GM10248 (cell line): ENCODE measurements at regions of chr1 and their contacts with region 1.

Region 1: DNA sequence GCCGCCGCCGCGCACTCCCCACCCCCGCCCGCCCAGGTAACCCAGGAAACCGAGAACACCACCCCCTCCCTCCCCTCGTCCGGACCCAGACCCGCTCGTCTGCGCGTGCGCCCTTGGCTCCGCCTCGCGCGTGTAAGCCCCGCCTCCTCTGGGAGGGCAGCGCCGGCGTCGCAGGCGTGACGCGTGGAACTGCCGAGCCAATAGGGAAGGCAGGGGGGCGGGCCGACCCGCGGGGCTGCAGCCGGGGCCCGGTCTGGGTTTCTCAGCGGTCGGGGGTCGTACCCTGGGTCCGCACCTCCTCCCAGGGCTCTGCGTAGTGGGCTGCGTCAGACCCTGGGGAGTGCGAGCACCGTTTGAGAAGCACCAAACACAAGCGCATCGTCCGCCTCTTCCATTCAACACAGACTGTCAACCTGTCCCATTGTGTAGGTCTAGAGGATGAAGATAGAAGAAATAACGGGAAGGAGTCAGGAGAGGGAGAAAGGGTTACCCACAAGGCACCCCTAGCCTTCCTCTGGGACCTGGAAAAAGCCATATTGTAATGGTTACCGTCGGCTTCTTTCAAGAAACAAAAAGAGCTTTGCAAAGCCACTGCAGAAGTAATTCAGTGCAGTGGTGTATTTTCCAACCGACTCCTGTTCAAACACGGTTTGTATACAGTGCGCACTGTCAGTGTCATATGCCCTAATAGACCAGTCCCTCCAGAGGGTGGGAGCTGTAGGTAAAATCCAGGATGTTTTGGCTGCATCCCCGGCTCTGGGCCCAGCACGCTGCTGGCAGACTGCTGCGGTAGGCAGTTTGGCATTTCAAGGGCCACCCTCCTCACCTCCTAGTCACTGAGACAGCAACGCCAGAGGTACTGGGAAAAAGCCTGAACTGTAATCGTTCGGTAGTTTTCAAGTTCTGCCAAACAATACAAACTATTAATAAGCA is 473 bp upstream of the LYST start:
- DNase-seq: peak; percentile 98
- CTCF ChIP-seq: no peak

Region 2: DNA sequence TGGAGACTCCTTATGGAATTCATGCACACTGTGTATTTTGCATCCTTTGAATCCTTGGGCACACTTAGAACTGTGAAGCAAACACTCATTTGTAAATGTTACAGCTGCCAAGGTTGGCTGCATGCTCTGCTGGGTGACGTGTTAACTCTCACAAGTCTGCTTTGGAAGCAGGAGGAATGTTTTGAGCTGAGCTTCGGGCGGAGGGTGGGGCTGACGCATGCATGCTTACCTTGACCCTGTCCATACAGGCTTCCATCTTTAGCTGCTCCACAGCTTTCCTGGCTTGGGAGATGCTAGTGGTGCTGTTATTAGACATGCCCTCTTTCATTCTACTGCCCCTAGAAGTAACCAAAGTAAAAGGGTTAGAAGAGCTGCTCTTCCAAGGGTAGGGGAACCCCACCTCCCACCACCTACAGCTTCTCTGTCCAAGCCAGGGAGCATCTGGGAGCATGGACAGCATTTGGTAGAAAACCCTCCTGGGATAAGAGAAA is 283.6 kb before region 1 on chr1:
- CTCF ChIA-PET with region 1: no interaction called
- POLR2A ChIA-PET with region 1: no interaction called
- DNase-seq: no peak
- CTCF ChIP-seq: no peak

Region 3: GRCh38 chr1:235855811-235856429 is 11.3 kb before region 1 on chr1:
- CTCF ChIA-PET with region 1: interaction called, 12 read pairs
- POLR2A ChIA-PET with region 1: no interaction called
- DNase-seq: peak; percentile 23
- CTCF ChIP-seq: no peak

Region 4: GRCh38 chr1:235946571-235946981 is 79.4 kb after region 1 on chr1:
- CTCF ChIA-PET with region 1: interaction called, 26 read pairs
- POLR2A ChIA-PET with region 1: no interaction called
- DNase-seq: peak; percentile 49
- CTCF ChIP-seq: peak; percentile 62